ENCODE measurements at regions of chr5 and their contacts with region 1.

Region 1: DNA sequence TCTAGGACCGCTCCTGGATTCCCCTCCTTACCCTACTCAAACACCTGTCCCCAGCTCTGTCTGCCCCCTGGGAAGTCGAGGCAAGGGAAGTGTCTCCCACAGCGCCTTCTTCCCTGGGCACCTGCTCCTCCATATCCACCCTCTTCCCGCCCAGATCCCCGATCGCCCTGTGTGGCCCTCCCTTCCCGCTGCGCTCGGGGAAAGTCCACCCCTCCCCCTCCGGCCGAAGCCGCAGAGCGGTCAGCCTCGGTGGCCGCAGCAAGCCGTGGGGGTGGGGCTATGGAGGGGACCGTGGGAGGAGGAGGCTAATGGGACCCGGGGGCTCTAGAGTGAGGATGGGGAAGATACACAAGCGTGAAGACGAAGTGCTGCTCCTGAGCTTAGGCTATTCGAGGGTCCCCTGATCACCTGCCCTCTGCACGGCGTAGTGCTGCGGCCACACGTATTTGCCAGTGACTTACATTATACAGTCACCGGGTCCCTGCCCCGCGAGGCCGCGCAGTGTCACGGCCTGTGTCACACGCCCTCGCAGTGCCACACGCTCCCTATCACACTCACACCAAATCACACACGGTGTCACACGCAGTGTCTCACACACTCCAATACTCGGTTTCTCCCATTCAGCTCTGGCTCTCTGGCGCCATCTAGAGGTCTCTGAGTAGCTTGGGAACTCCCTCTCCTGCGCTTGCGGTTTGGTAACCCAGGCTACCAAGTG is 658 bp upstream of the PCDH1 start:
- DNase-seq: peak; percentile 93
- H3K4me3 ChIP-seq: peak overlapping the region; percentile 39 to 76 (median 48)
- H3K27ac ChIP-seq: peak overlapping the region in 3 of 8 donors; percentile 11 to 42 (median 12)
- H3K4me1 ChIP-seq: peaks cover 33 to 61% (median 43%) of the 10 kb centered on the region in 6 donors
- H3K27me3 ChIP-seq: peaks cover 25 to 100% (median 72%) of the 10 kb centered on the region in 7 donors
- CTCF ChIP-seq: peak; percentile 88 to 99 (median 96)
- POLR2A ChIP-seq: no peak

Region 2: GRCh38 chr5:141701360-141702119 is 177.3 kb before region 1 on chr5:
- intact Hi-C with region 1: loop called (anchors 5 kb)
- DNase-seq: no peak
- H3K4me3 ChIP-seq: peak overlapping the region in 4 of 8 donors; percentile 45 to 77 (median 54)
- H3K27ac ChIP-seq: no peak overlapping the region
- H3K4me1 ChIP-seq: peaks cover 8 to 24% (median 20%) of the 10 kb centered on the region in 6 donors
- H3K27me3 ChIP-seq: peaks cover 0 to 75% (median 15%) of the 10 kb centered on the region in 7 donors
- CTCF ChIP-seq: no peak
- POLR2A ChIP-seq: no peak

Region 3: GRCh38 chr5:141951332-141951781 is 72.5 kb after region 1 on chr5:
- intact Hi-C with region 1: loop called (anchors 10 kb)
- DNase-seq: no peak
- H3K4me3 ChIP-seq: peak overlapping the region in 2 of 8 donors; percentile 53 to 64
- H3K27ac ChIP-seq: peak overlapping the region in 5 of 8 donors; percentile 44 to 82 (median 71)
- H3K4me1 ChIP-seq: peaks cover 20 to 98% (median 63%) of the 10 kb centered on the region in 6 donors
- H3K27me3 ChIP-seq: no peaks in the 10 kb centered on the region
- CTCF ChIP-seq: peak in 7 of 11 experiments; percentile 8 to 48 (median 41)
- POLR2A ChIP-seq: no peak